GM12878 (cell line): ENCODE measurements at regions of chr14 and their contacts with region 1.

Region 1: DNA sequence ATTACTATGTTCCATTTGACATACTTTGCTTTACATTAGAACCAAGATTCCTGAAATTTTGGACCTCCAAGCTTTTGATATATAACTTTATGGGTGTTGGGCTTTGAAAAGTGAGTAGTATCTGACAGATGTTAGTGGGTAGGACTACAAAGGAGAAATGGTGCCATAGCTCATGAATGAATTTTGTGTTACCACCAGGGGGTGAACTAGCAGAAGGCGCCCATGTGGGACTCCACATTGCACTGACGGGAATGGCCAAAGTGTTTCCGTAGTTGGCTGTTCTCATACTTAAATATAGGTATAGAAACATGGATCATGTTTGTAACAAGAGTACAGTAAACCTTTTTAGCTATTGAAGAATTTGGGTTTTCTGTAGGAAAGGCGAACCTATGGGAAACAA is 337.5 kb downstream of the FLRT2 start:
- DNase-seq: no peak
- ATAC-seq: peak; percentile 53; the same call in 1 of the 3 replicates
- H3K4me3 ChIP-seq: no peak overlapping the region
- H3K27ac ChIP-seq: no peak overlapping the region
- H3K4me1 ChIP-seq: no peaks in the 10 kb centered on the region
- H3K27me3 ChIP-seq: no peaks in the 10 kb centered on the region
- CTCF ChIP-seq: no peak; a peak in 1 of 6 replicates
- EP300 ChIP-seq: no peak
- POLR2A ChIP-seq: no peak
- RAD21 ChIP-seq: peak; percentile 7; the same call in 1 of the 2 replicates

Region 2: GRCh38 chr14:86057018-86057667 is 189.7 kb after region 1 on chr14:
- CTCF ChIA-PET with region 1: interaction called, 16 read pairs
- POLR2A ChIA-PET with region 1: no interaction called
- RAD21 ChIA-PET with region 1: interaction called, 7 read pairs
- SMC1A ChIA-PET with region 1: interaction called, 12 read pairs
- in situ Hi-C with region 1: no loop called
- intact Hi-C with region 1: loop called (anchors 5 kb)
- DNase-seq: no peak
- ATAC-seq: peak; percentile 40; the same call in 1 of the 3 replicates
- H3K4me3 ChIP-seq: no peak overlapping the region
- H3K27ac ChIP-seq: no peak overlapping the region
- H3K4me1 ChIP-seq: no peaks in the 10 kb centered on the region
- H3K27me3 ChIP-seq: no peaks in the 10 kb centered on the region
- CTCF ChIP-seq: peak; percentile 62 to 68 (median 68)
- EP300 ChIP-seq: no peak
- POLR2A ChIP-seq: no peak
- RAD21 ChIP-seq: peak; percentile 77